ENCODE measurements at regions of chr6 and their contacts with region 1.

Region 1: DNA sequence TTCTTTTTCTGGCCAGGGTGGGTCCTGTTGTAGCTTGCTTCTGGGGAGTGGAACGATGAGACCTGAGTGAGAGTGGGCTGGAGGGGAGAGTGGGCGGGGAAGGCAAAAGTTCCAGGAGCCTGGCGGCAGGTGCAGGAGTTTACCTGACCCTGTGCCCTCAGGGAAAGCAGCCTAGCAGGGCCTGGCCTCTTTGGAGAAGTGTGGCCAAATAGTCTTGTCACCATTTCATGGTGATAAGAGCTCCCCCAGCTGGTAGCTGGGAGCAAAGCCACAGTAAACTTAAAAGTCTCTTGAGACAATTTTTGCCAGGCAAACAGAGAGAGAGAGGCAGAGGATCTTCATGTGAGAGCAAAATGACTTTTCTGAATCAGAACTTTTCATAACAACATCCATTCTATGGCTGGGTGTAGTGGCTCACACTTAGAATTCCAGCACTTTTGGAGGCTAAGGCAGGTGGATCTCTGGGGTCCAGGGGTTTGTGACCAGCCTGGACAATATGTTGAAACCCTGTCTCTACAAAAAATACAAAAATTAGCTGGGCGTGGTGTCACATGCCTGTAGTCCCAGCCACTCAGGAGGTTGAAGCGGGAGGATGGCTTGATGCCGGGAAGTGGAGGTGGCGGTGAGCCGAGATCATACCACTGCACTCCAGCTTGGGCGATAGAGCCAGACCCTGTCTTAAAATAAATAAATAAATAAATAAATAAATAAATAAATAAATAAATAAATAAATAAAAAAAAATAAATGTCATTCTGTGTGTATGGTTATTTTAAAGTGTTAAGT is 161.8 kb upstream of the SCGN start:
- DNase-seq: no peak
- H3K4me3 ChIP-seq: no peak overlapping the region
- H3K27ac ChIP-seq: no peak overlapping the region
- H3K4me1 ChIP-seq: no peaks in the 10 kb centered on the region
- H3K27me3 ChIP-seq: no peaks in the 10 kb centered on the region
- CTCF ChIP-seq: peak; percentile 51 to 83 (median 52)
- POLR2A ChIP-seq: no peak

Region 2: DNA sequence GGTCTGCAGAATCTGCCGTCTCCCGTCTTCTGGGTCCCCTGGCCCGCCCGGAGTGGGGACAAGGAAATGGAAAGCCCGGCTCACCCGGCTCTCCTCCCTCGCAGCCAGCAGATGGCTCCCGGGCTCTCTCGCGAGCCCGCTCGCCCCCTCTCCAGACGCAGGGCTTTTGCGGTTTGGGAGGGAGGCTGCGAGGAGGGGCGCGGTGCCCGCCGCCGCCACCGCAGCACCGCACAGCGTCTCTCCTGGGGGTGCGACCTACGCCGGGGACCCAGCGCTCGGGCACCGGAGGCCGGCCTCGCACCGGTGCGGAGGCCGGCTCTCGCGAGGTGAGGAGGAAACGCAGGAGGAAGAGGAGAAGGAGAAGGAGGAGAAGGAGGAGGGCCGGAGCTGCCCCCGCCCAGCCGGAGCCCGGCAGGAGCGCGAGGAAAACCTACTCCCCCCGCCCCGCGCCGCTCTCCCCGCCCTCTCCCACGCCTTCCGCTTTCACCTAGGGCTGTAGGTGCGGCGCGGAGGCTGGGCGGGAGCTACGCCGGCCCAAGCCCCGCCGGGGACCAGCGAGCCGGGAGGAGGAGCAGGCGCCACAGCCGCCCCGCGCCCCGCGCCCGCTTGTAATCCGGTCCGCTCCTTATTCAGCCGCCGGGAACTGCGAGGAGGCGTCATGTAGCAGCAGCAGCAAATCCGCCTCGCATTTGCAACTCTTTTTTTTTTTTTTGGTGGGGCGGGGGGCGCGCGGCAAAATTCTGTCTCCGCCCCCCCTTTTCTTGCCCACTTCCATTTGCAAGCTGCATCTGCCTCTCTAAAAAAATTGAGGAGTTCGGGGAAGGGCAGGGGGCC is 211.1 kb before region 1 on chr6 and contains the start of gene CARMIL1:
- intact Hi-C with region 1: loop called (anchors 2 kb)
- DNase-seq: no peak
- H3K4me3 ChIP-seq: peak within 1 kb of the TSS; percentile 73 to 74
- H3K27ac ChIP-seq: peak within 1 kb of the TSS; percentile 73
- H3K4me1 ChIP-seq: peaks cover 17% of the 10 kb centered on the region
- H3K27me3 ChIP-seq: no peaks in the 10 kb centered on the region
- CTCF ChIP-seq: peak in 2 of 3 experiments; percentile 58 to 81
- POLR2A ChIP-seq: no peak
- total RNA-seq, gene CARMIL1: 19.6 TPM

Region 3: DNA sequence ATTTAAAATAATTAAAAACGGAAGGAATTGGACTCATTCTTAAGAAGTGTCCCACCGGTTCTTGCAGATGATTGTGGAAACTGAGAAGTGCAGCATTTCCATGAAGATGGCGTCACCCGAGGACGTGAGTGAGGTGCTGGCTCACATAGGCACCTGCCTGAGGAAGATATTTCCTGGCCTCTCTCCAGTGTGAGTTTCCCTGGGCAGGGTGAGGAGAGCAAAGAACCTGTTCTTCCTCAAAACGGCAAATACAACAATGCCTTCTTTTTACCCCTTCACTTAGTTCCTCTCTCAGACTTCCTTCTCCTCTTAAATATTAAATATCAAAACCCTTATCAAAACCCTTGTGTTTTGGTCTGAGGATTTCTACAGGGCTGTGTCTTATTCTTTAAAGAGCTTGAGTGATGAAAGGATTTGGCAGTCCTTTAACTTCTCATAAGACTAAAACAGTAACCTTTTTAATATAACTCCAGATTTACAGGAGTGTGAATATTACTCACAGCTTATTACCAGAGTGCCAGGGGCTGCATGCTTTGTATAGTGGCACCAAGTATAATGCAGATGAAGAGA is 54.7 kb before region 1 on chr6:
- intact Hi-C with region 1: no loop called
- DNase-seq: no peak
- H3K4me3 ChIP-seq: no peak overlapping the region
- H3K27ac ChIP-seq: no peak overlapping the region
- H3K4me1 ChIP-seq: no peaks in the 10 kb centered on the region
- H3K27me3 ChIP-seq: no peaks in the 10 kb centered on the region
- CTCF ChIP-seq: no peak
- POLR2A ChIP-seq: no peak

Region 4: DNA sequence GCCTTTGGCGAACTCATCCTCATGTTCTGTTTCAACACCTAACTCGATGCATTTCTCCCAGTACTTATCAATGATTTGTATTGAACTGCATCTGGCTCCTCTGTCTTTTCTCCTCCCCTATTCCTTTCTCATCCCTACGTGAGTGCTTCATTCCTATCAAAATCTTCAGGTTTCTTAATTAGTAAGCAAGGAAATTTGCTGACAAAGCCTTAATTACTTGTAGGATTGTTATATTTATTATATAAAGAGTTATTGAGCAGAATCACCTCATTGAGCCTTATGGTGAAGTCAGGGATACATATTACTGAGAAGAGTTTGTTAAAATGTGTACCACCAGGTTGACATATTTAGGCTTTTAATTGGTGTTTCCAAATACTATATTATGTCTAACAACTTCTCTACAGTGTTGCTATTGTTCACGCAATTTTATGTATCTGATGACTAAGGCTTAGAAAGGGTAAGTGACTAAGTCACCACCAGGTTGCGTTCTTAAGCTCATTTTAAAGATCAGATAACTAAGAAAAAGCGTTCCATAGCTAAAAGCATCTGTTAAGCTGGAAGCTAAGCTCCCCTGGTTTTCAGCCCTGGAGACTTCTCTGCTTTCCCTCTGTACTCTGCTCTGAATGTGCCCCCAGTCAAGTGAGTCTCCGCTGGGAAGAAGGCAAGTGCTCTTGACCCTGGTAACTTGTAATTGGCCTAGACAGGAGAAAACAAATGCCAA is 180.7 kb after region 1 on chr6:
- intact Hi-C with region 1: no loop called
- DNase-seq: no peak
- H3K4me3 ChIP-seq: no peak overlapping the region
- H3K27ac ChIP-seq: no peak overlapping the region
- H3K4me1 ChIP-seq: no peaks in the 10 kb centered on the region
- H3K27me3 ChIP-seq: no peaks in the 10 kb centered on the region
- CTCF ChIP-seq: no peak
- POLR2A ChIP-seq: no peak

Region 5: GRCh38 chr6:27275025-27275956 is 1785.1 kb after region 1 on chr6:
- intact Hi-C with region 1: no loop called
- DNase-seq: no peak
- H3K4me3 ChIP-seq: no peak overlapping the region
- H3K27ac ChIP-seq: no peak overlapping the region
- H3K4me1 ChIP-seq: no peaks in the 10 kb centered on the region
- H3K27me3 ChIP-seq: peaks cover 6% of the 10 kb centered on the region
- CTCF ChIP-seq: no peak
- POLR2A ChIP-seq: no peak

Measured in vagina (tissue), 2 donors.